SK-N-SH (cell line): ENCODE measurements at regions of chr2 and their contacts with region 1.

Region 1: GRCh38 chr2:47088668-47089462 is 66.2 kb downstream of the STPG4 start:
- DNase-seq: peak; percentile 87
- H3K4me3 ChIP-seq: no peak overlapping the region
- H3K27ac ChIP-seq: peak overlapping the region; percentile 77 to 100
- H3K4me1 ChIP-seq: peaks cover 18 to 85% of the 10 kb centered on the region in 2 experiments
- H3K27me3 ChIP-seq: no peaks in the 10 kb centered on the region
- CTCF ChIP-seq: 0 out of 2 replicates have a peak, but pooled peaks have one; percentile 5
- EP300 ChIP-seq: peak in 1 of 2 experiments; percentile 100; a peak in 2 of 4 replicates
- RAD21 ChIP-seq: peak; percentile 0; the same call in 1 of the 2 replicates

Region 2: DNA sequence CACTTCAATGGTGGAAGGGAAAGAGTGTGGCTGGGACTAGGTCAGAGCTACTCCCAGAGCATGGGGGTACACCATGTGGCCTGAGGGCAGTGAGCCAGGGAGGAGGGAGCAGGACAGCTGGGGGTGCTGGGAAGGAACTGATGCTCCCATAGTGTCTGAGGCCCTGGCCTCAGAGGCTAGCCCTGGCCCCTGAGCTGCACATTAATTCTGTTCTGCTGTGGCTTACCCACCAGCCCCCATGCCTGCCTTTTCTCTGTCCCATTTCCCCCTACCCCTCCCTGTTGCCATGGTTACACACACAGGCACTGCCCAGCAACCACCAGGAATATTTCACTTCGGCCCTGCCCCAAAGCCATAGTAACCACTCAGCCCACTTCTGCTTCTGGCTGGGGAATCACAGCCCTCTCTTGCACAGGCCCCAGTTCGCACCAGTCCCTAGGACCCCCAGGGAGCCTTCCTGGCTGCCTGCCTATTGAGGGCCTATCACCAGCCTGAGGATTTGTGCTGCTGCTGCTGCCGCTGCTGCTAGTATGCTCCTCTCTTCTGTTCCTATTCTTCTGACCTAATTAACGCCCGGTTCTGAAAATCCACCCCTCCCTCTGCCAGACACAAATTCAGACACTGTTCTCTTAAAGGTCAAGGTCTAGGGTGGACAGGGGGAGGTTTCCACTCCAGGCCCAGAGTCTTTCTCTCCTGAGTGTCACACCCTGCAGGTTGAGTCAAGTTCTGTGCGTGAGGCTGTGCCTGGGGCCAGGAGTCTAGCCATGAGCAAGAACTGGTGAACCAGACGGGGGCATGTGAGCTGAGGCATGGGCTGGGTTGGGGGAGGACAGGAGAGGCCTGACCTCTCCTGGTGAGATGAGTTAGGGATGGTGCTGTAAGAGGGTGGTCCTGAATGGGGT is 86.1 kb before region 1 on chr2:
- CTCF ChIA-PET with region 1: interaction called, 14 read pairs
- POLR2A ChIA-PET with region 1: interaction called, 17 read pairs
- DNase-seq: peak; percentile 90
- H3K4me3 ChIP-seq: no peak overlapping the region
- H3K27ac ChIP-seq: peak overlapping the region; percentile 37 to 99; a peak in 3 of 4 replicates
- H3K4me1 ChIP-seq: peaks cover 9 to 87% of the 10 kb centered on the region in 2 experiments
- H3K27me3 ChIP-seq: no peaks in the 10 kb centered on the region
- CTCF ChIP-seq: no peak
- EP300 ChIP-seq: peak in 1 of 2 experiments; percentile 27; a peak in 1 of 4 replicates
- RAD21 ChIP-seq: no peak

Region 3: DNA sequence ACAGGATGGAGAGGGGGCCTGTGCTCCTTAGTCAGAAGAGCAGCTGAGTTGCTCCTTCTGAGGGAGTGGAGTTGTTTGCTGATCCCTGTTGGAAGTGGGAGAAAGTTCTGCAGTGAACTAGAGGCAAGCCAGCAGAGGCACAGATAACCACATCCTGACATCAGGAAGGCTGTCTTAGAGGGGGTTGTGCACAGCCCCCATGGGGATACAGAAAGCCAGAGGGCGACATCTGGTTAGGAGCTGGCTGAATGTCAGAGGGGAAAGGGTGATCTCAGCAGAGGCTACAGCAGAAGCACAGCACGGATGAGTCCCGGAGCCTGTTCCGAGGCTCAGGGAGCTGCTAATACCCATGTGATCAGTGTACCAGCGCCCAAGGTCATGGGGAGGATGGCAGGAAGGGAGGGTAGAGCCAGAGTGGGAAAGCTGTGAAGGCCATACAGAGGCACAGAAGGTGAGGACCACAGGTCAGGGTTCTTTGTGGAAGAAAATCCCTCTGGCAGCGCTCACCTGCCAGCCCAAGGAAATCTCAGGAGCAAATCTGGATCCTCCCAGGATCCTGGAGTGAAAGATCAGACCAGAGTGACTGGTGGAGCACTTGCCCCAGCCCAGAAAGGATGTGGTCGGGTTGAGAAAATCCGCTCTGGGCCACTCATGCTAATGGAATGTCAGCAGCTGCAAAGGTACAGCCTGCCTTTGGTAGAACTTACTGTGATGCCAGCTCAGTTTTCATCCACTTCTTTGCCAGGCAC is 45.5 kb before region 1 on chr2:
- CTCF ChIA-PET with region 1: interaction called, 23 read pairs
- POLR2A ChIA-PET with region 1: interaction called, 15 read pairs
- DNase-seq: peak; percentile 82
- H3K4me3 ChIP-seq: peak overlapping the region; percentile 37 to 43; a peak in 3 of 4 replicates
- H3K27ac ChIP-seq: peak overlapping the region; percentile 96 to 99
- H3K4me1 ChIP-seq: peaks cover 37 to 76% of the 10 kb centered on the region in 2 experiments
- H3K27me3 ChIP-seq: no peaks in the 10 kb centered on the region
- CTCF ChIP-seq: peak; percentile 20
- EP300 ChIP-seq: peak; percentile 67 to 95
- RAD21 ChIP-seq: peak; percentile 48

Region 4: GRCh38 chr2:47065771-47066380 is 23.0 kb before region 1 on chr2:
- CTCF ChIA-PET with region 1: interaction called, 31 read pairs
- POLR2A ChIA-PET with region 1: interaction called, 36 read pairs
- DNase-seq: peak; percentile 49
- H3K4me3 ChIP-seq: no peak overlapping the region
- H3K27ac ChIP-seq: peak overlapping the region; percentile 96 to 97
- H3K4me1 ChIP-seq: peaks cover 69 to 95% of the 10 kb centered on the region in 2 experiments
- H3K27me3 ChIP-seq: no peaks in the 10 kb centered on the region
- CTCF ChIP-seq: peak; percentile 33; the same call in 1 of the 2 replicates
- EP300 ChIP-seq: peak; percentile 38 to 98; a peak in 3 of 4 replicates
- RAD21 ChIP-seq: no peak; the same call in 1 of the 2 replicates

Region 5: GRCh38 chr2:47076586-47077441 is 12.1 kb before region 1 on chr2:
- CTCF ChIA-PET with region 1: interaction called, 27 read pairs
- POLR2A ChIA-PET with region 1: interaction called, 36 read pairs
- DNase-seq: peak; percentile 62
- H3K4me3 ChIP-seq: no peak overlapping the region
- H3K27ac ChIP-seq: peak overlapping the region; percentile 97 to 98
- H3K4me1 ChIP-seq: peaks cover 35 to 85% of the 10 kb centered on the region in 2 experiments; a peak in 3 of 4 replicates
- H3K27me3 ChIP-seq: no peaks in the 10 kb centered on the region
- CTCF ChIP-seq: no peak
- EP300 ChIP-seq: peak in 1 of 2 experiments; percentile 93; a peak in 2 of 4 replicates
- RAD21 ChIP-seq: no peak

Region 6: GRCh38 chr2:47174733-47175361 is 86.0 kb after region 1 on chr2:
- CTCF ChIA-PET with region 1: interaction called, 11 read pairs
- POLR2A ChIA-PET with region 1: interaction called, 8 read pairs
- DNase-seq: peak; percentile 38
- H3K4me3 ChIP-seq: peak overlapping the region; percentile 100
- H3K27ac ChIP-seq: peak overlapping the region; percentile 98 to 100
- H3K4me1 ChIP-seq: peaks cover 22 to 39% of the 10 kb centered on the region in 2 experiments; a peak in 3 of 4 replicates
- H3K27me3 ChIP-seq: no peaks in the 10 kb centered on the region
- CTCF ChIP-seq: no peak
- EP300 ChIP-seq: no peak
- RAD21 ChIP-seq: peak; percentile 26; the same call in 1 of the 2 replicates

Region 7: GRCh38 chr2:47205576-47206141 is 116.8 kb after region 1 on chr2:
- CTCF ChIA-PET with region 1: no interaction called
- POLR2A ChIA-PET with region 1: no interaction called
- DNase-seq: peak; percentile 77
- H3K4me3 ChIP-seq: no peak overlapping the region
- H3K27ac ChIP-seq: peak overlapping the region in 1 of 2 experiments; percentile 73; a peak in 2 of 4 replicates
- H3K4me1 ChIP-seq: peaks cover 11 to 30% of the 10 kb centered on the region in 2 experiments; a peak in 3 of 4 replicates
- H3K27me3 ChIP-seq: no peaks in the 10 kb centered on the region
- CTCF ChIP-seq: no peak
- EP300 ChIP-seq: peak in 1 of 2 experiments; percentile 78; a peak in 2 of 4 replicates
- RAD21 ChIP-seq: peak; percentile 37